B cell (primary cell): ENCODE measurements at regions of chr1 and their contacts with region 1.

Region 1: DNA sequence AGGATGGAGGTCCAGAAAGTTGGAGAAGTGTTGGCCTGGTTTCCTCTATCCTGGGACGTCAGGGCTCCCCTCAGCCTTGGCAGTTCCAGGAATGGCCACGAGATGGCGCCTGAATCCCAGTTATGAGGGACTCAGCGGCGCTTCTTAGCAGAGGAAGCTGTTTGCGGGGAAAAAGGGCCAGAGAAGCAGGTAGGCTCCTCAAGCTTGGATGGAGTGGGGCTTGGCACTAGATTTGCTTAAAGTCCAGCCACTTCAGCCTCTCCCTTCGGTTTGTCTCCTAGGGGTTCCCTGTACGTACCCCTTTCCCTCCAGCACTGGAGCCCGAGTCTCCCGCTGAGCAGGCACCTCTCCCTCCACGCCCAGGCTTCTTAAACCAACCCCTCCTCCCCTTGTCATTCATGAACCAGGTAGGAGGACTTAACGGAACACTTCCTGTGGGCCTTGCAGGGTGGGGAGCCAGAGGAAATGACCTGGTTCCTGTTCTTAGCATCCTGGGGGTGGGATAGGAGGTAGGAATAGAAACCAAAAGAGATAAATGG is 32.0 kb upstream of the TENT5B start:
- DNase-seq: peak; percentile 88
- ATAC-seq: peak; percentile 94
- H3K4me3 ChIP-seq: peak overlapping the region in 4 of 5 experiments; percentile 6 to 51 (median 36)
- H3K4me3 Mint-ChIP-seq: peak overlapping the region; percentile 52
- H3K27ac ChIP-seq: no peak overlapping the region
- H3K27ac Mint-ChIP-seq: peak overlapping the region; percentile 6
- H3K4me1 ChIP-seq: peaks cover 6 to 15% of the 10 kb centered on the region in 2 donors
- H3K4me1 Mint-ChIP-seq: peaks cover 15% of the 10 kb centered on the region
- H3K27me3 ChIP-seq: peaks cover 0 to 5% (median 0%) of the 10 kb centered on the region in 4 experiments
- H3K27me3 Mint-ChIP-seq: peaks cover 3% of the 10 kb centered on the region
- CTCF ChIP-seq: peak; percentile 97

Region 2: DNA sequence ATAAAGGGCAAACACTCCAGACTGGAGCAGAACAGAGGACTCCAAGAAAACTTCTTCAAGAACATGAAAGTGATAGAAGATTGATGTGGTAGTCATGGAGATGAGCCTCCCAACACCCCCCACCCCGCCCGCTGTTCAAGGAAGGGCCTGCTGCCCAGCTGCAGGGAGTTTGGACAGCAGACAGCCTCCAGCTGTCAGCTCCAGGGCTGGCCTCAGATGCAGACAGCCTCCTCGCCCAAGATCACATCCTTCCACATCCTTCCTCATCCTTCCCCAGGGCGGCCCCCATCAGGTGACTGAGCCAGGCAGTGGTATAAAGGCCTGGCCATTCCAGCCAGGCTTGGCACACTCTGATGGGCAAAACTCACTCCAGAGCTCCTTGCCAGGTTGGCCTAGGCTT is 547.8 kb before region 1 on chr1:
- CTCF ChIA-PET with region 1: no interaction called
- POLR2A ChIA-PET with region 1: no interaction called
- intact Hi-C with region 1: no loop called
- DNase-seq: no peak
- ATAC-seq: no peak
- H3K4me3 ChIP-seq: no peak overlapping the region
- H3K4me3 Mint-ChIP-seq: no peak overlapping the region
- H3K27ac ChIP-seq: no peak overlapping the region
- H3K27ac Mint-ChIP-seq: no peak overlapping the region
- H3K4me1 ChIP-seq: peaks cover 7 to 18% of the 10 kb centered on the region in 2 donors
- H3K4me1 Mint-ChIP-seq: peaks cover 9% of the 10 kb centered on the region
- H3K27me3 ChIP-seq: no peaks in the 10 kb centered on the region
- H3K27me3 Mint-ChIP-seq: no peaks in the 10 kb centered on the region
- CTCF ChIP-seq: no peak

Region 3: DNA sequence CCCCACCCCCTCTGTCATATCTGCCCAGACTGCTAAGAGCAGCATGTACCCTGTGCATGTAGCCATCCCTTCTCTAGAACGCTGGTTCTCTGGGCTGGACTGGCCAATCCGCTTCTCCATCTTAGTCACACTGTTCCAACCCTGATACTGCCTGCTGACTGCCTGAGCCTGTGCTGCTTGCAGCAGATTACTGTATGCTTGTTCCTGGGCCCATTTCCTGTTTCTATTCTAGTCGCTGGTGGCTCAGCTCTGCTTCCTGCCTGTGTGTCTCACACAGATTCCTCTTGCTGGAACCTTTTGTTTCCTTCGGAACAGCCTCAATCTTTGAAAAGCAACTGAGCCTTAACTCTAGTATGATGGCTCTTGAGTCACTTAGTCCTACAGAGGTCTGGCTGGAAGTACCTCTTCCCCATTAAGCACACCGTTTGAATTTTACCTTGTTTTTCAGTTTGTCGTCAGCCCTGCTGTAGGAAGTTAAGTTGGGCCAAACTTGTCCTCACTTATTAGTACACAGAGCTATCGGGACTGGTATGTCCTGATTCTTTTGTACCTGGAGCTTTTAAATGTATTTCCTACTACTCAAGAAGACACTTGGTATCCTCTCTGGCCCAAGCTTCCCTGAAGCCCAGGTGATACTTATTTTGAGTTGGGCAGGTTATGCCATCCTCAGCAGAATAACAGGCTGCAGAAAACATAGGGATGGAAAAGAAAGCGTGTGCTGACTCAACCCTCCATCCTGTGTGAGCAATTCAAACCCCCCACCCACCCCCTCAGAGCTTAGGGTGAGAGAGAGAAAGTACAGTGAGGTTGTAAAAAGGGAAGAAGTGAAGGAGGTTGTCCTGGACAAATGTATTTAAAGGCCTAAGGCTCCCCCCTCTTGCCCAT is 300.4 kb before region 1 on chr1:
- CTCF ChIA-PET with region 1: no interaction called
- POLR2A ChIA-PET with region 1: no interaction called
- intact Hi-C with region 1: no loop called
- DNase-seq: peak; percentile 88
- ATAC-seq: peak; percentile 95
- H3K4me3 ChIP-seq: peak overlapping the region; percentile 7 to 51 (median 39)
- H3K4me3 Mint-ChIP-seq: peak overlapping the region; percentile 80
- H3K27ac ChIP-seq: peak overlapping the region; percentile 75 to 96
- H3K27ac Mint-ChIP-seq: peak overlapping the region; percentile 92
- H3K4me1 ChIP-seq: peaks cover 82 to 88% of the 10 kb centered on the region in 2 donors
- H3K4me1 Mint-ChIP-seq: peaks cover 83% of the 10 kb centered on the region
- H3K27me3 ChIP-seq: no peaks in the 10 kb centered on the region
- H3K27me3 Mint-ChIP-seq: no peaks in the 10 kb centered on the region
- CTCF ChIP-seq: no peak

Region 4: GRCh38 chr1:26993237-26994019 is 51.3 kb before region 1 on chr1 and contains the start of gene TRNP1:
- CTCF ChIA-PET with region 1: interaction called, 83 read pairs
- POLR2A ChIA-PET with region 1: no interaction called
- intact Hi-C with region 1: loop called (anchors 1 kb)
- DNase-seq: peak; percentile 86
- ATAC-seq: peak; percentile 75
- H3K4me3 ChIP-seq: peak within 1 kb of the TSS; percentile 11 to 75 (median 59)
- H3K4me3 Mint-ChIP-seq: peak within 1 kb of the TSS; percentile 86
- H3K27ac ChIP-seq: no peak within 1 kb of the TSS
- H3K27ac Mint-ChIP-seq: peak within 1 kb of the TSS; percentile 32
- H3K4me1 ChIP-seq: peaks cover 13 to 24% of the 10 kb centered on the region in 2 donors
- H3K4me1 Mint-ChIP-seq: peaks cover 15% of the 10 kb centered on the region
- H3K27me3 ChIP-seq: peaks cover 0 to 54% (median 30%) of the 10 kb centered on the region in 4 experiments
- H3K27me3 Mint-ChIP-seq: peaks cover 41% of the 10 kb centered on the region
- CTCF ChIP-seq: no peak
- total RNA-seq, gene TRNP1: 2.1 and 2.3 TPM in 2 replicates

Region 5: DNA sequence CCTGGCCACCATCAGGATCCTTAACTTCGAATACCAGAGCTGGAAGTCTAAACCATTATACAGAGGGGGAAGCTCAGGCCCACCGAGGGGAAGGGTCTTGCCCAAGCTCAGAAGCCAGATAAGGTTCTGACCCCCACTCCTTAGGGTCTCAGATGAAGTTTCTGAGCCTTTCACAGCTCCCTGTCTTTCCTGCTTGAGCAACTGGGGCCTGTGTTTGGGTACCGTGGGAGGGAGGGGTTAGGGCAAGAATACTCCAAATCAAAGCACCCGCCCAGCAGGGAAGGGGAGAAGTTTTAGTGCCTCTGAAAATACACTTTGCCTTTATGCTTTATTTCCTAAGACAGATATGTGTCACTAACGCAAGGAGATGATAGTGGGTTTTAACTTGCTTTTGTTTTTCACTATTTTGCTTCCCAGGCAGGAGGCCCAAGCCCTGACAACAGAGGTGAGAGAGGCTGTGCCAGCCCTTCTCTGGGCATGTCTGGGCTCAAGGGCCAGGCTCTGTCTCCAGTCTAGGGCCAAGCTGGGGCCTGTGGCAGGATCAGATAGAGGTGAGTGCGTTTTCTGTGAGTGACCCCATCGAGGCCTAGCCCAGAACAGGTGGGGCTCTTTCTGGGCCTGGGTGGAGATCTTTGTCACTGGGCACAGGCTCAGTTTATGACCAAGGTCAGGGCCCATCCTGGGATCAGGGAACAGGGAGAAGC is 11.5 kb before region 1 on chr1:
- CTCF ChIA-PET with region 1: interaction called, 26 read pairs
- POLR2A ChIA-PET with region 1: interaction called, 4 read pairs
- intact Hi-C with region 1: no loop called
- DNase-seq: no peak
- ATAC-seq: no peak
- H3K4me3 ChIP-seq: no peak overlapping the region
- H3K4me3 Mint-ChIP-seq: no peak overlapping the region
- H3K27ac ChIP-seq: no peak overlapping the region
- H3K27ac Mint-ChIP-seq: no peak overlapping the region
- H3K4me1 ChIP-seq: peaks cover 5 to 8% of the 10 kb centered on the region in 2 donors
- H3K4me1 Mint-ChIP-seq: peaks cover 5% of the 10 kb centered on the region
- H3K27me3 ChIP-seq: peaks cover 0 to 18% (median 0%) of the 10 kb centered on the region in 4 experiments
- H3K27me3 Mint-ChIP-seq: peaks cover 3% of the 10 kb centered on the region
- CTCF ChIP-seq: no peak

Region 6: DNA sequence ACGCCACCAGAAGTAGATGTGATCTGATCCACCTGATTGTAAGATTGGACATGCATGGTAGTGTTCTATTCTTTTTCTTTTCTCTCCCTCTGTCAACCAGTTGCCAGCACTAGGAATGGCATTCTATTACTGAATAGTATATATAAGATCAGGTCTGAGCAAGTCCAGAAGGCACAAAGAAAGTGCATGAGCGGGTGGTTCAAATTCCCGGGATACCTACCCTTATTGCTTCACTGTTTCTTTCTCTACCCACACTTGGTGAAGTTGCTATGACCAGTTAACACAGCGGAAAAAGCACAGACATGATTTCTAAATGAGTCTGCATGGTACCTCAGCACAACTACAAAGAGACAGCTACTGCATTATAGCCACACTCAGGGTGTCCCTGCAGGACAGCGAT is 46.2 kb after region 1 on chr1:
- CTCF ChIA-PET with region 1: interaction called, 388 read pairs
- POLR2A ChIA-PET with region 1: no interaction called
- intact Hi-C with region 1: no loop called
- DNase-seq: no peak
- ATAC-seq: no peak
- H3K4me3 ChIP-seq: no peak overlapping the region
- H3K4me3 Mint-ChIP-seq: no peak overlapping the region
- H3K27ac ChIP-seq: no peak overlapping the region
- H3K27ac Mint-ChIP-seq: no peak overlapping the region
- H3K4me1 ChIP-seq: no peaks in the 10 kb centered on the region
- H3K4me1 Mint-ChIP-seq: no peaks in the 10 kb centered on the region
- H3K27me3 ChIP-seq: peaks cover 0 to 9% (median 1%) of the 10 kb centered on the region in 4 experiments
- H3K27me3 Mint-ChIP-seq: peaks cover 6% of the 10 kb centered on the region
- CTCF ChIP-seq: no peak

Region 7: GRCh38 chr1:27111626-27112573 is 67.2 kb after region 1 on chr1:
- CTCF ChIA-PET with region 1: interaction called, 11 read pairs
- POLR2A ChIA-PET with region 1: no interaction called
- intact Hi-C with region 1: no loop called
- DNase-seq: peak; percentile 74
- ATAC-seq: peak; percentile 98
- H3K4me3 ChIP-seq: no peak overlapping the region
- H3K4me3 Mint-ChIP-seq: no peak overlapping the region
- H3K27ac ChIP-seq: peak overlapping the region; percentile 4 to 65
- H3K27ac Mint-ChIP-seq: peak overlapping the region; percentile 85
- H3K4me1 ChIP-seq: peaks cover 13 to 26% of the 10 kb centered on the region in 2 donors
- H3K4me1 Mint-ChIP-seq: peaks cover 27% of the 10 kb centered on the region
- H3K27me3 ChIP-seq: no peaks in the 10 kb centered on the region
- H3K27me3 Mint-ChIP-seq: no peaks in the 10 kb centered on the region
- CTCF ChIP-seq: peak; percentile 26

Region 8: GRCh38 chr1:27203946-27204345 is 159.3 kb after region 1 on chr1:
- CTCF ChIA-PET with region 1: interaction called, 19 read pairs
- POLR2A ChIA-PET with region 1: no interaction called
- intact Hi-C with region 1: loop called (anchors 2 kb)
- DNase-seq: no peak
- ATAC-seq: no peak
- H3K4me3 ChIP-seq: no peak overlapping the region
- H3K4me3 Mint-ChIP-seq: no peak overlapping the region
- H3K27ac ChIP-seq: no peak overlapping the region
- H3K27ac Mint-ChIP-seq: no peak overlapping the region
- H3K4me1 ChIP-seq: no peaks in the 10 kb centered on the region
- H3K4me1 Mint-ChIP-seq: peaks cover 5% of the 10 kb centered on the region
- H3K27me3 ChIP-seq: no peaks in the 10 kb centered on the region
- H3K27me3 Mint-ChIP-seq: no peaks in the 10 kb centered on the region
- CTCF ChIP-seq: no peak

Region 9: GRCh38 chr1:27392096-27392777 is 347.6 kb after region 1 on chr1 and contains the start of gene GPR3:
- CTCF ChIA-PET with region 1: interaction called, 9 read pairs
- POLR2A ChIA-PET with region 1: no interaction called
- intact Hi-C with region 1: loop called (anchors 2 kb)
- DNase-seq: peak; percentile 96
- ATAC-seq: peak; percentile 91
- H3K4me3 ChIP-seq: peak within 1 kb of the TSS in 4 of 5 experiments; percentile 34 to 60 (median 56)
- H3K4me3 Mint-ChIP-seq: peak within 1 kb of the TSS; percentile 81
- H3K27ac ChIP-seq: peak within 1 kb of the TSS in 1 of 2 donors; percentile 50
- H3K27ac Mint-ChIP-seq: peak within 1 kb of the TSS; percentile 67
- H3K4me1 ChIP-seq: peaks cover 12 to 24% of the 10 kb centered on the region in 2 donors
- H3K4me1 Mint-ChIP-seq: peaks cover 22% of the 10 kb centered on the region
- H3K27me3 ChIP-seq: no peaks in the 10 kb centered on the region
- H3K27me3 Mint-ChIP-seq: peaks cover 3% of the 10 kb centered on the region
- CTCF ChIP-seq: peak; percentile 65
- total RNA-seq, gene GPR3: not detected in 2 replicates